ENCODE measurements at regions of chr16 and their contacts with region 1.

Region 1: DNA sequence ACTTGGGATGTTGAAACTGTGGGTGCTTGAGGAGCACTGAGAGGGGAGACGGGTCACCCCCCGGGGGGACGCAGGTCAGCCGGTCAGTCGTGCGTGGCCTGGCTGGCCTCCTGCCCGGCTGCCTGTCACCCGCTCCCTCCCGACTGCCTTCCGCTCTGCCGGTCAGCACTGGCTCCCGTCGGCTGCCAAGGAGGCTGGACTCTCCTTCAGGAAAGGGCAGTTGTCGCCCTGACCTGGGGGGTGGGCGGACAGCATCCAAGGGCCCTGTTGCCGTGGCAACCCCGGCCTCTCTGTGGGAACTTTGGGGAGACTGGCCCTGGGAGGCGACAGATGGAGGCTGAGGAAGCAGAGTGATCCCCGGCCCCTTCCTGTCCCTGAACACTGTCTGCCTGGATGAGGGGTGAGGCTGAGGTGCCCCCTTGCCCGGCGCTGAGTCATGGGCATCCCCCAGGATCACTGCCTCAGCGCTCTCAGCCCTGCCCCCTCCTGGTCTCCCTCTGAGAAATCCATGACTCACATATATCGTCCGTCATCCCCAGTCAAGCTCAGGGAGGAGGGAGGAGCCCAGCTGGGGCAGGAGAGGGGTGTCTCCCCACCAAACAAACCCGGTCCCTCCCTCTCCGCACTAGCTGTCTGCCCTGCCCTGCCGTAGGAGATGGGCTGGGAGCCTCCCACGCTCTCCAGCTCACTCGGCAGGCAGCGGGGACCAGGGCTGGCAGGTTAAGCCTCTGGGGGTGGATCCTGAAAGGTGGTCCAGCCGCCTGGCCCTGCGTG is at the start of gene ADGRG1:
- DNase-seq: peak; percentile 80
- ATAC-seq: peak; percentile 69
- total RNA-seq, gene ADGRG1: 23.1 TPM

Region 2: DNA sequence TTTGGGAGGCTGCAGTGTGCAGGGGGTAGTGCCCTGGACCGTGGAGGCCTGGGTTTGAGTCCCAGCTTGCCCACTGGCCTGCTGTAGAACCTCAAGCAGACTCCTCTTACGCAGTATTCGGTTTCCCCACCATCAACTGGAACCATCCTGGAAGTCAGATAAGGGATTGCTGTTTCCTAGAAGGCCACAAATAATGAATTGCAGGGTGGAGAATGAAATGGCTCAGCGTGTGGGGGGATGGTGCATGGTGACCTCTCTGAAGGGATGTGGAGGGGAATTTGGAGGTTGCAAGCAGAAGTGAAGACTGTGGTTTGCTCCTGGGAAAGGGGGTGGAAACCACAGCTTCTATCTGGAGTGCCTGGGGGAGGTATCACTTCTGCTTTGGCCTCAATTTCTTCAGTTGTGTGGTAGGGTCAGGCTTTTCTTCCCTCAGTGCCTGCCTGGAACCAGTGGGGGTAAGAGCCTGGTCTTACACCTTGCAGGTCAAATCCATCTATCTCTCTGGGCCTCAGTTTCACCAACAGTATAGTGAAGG is 84.0 kb before region 1 on chr16:
- intact Hi-C with region 1: no loop called
- DNase-seq: no peak
- ATAC-seq: peak; percentile 49

Region 3: DNA sequence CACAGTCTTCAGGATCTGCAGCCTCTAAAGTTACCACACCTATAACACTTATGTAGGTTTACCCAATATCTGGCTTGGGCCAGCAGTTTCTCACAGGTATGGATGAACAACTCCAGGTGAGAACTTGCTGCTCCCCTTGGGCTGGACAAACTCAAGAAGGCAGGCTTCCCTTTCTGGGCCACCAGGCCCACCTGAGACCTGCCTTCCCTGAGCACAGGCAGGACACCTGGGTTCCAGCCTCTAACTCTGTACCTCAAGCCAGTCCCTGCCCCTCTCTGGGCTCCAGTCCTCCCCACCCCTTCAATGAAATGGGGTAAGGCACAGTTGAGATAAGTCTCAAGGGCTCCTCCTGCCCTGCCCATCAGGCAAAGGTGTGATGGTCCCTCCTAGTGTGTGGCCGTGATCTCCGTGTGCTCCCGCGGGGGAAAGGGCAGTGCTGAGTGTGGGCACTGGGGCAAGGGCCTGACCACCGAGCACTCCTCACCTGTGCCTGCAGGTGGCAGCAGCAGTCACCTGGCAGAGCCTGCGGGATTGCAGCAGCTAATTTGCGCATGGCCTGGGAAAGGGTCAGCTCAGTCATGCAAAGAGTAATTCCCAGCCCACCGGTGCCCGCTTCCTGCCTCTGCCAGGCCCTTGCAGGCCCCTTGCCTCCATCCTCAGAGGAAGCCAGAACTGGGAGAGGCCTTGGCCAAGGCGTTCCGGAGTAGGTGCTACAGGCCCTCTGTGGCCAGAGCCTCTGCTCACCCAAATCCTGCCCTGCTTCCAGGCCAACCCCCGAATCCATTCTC is 28.0 kb before region 1 on chr16:
- intact Hi-C with region 1: loop called (anchors 2 kb)
- DNase-seq: no peak
- ATAC-seq: peak; percentile 70